ENCODE measurements at regions of chr6 and their contacts with region 1.

Region 1: DNA sequence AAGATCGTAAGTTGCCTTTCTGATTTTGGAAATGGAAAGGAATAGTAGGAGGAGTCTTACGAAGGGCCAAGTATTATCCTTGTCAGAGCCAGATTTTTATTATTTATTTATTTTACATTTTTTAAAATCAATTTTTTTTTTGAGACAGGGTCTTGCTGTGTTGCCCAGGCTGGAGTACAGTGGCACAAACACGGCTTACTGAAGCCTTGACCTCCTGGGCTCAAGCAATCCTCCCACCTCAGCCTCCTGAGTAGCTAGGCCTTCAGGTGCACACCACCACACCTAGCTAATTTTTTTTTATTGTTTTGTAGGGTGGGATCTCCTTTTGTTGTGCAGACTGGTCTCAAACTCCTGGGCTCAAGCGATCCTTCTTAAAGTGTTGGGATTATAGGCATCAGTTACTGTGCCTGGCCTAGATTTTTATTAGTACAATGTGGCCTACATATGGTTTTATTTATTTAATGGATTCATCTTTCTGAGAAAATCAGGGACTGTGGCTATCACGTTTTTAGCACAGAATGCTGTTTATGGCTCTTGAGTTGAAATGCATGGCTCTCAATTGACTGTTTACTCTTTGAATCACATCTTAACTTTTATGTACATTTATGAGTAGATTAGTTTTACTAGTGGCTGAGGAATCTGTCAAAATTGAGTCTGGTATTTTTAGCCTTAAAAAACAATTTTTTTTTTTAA is 16.7 kb downstream of the CDC5L start:
- DNase-seq: no peak
- ATAC-seq: no peak
- H3K4me3 ChIP-seq: no peak overlapping the region
- H3K27ac ChIP-seq: peak overlapping the region; percentile 34
- H3K4me1 ChIP-seq: peaks cover 15% of the 10 kb centered on the region
- H3K27me3 ChIP-seq: no peaks in the 10 kb centered on the region
- CTCF ChIP-seq: no peak
- EP300 ChIP-seq: no peak
- POLR2A ChIP-seq: no peak
- RAD21 ChIP-seq: no peak

Region 2: DNA sequence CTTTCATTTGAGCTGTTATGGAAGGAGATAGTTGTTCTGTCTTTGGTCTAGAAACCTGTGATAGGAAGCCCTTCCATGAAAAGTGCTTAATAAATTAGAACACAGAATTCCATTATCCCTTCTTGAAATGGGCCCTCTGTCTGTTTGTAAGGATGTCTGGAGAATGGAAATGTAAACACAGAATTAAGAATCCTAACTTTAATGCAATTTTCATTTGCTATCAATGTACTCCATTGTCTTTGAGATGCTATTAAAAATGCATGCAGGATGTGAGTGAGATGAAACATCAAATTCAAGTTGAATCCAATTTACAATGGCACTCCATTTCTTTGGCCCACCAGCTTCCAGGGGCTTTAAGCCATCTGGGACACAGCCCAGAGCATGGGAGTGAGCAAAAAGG is 77.1 kb before region 1 on chr6:
- CTCF ChIA-PET with region 1: no interaction called
- POLR2A ChIA-PET with region 1: no interaction called
- in situ Hi-C with region 1: no loop called
- intact Hi-C with region 1: no loop called
- DNase-seq: no peak
- ATAC-seq: no peak
- H3K4me3 ChIP-seq: no peak overlapping the region
- H3K27ac ChIP-seq: no peak overlapping the region
- H3K4me1 ChIP-seq: no peaks in the 10 kb centered on the region
- H3K27me3 ChIP-seq: peaks cover 3 to 51% of the 10 kb centered on the region in 2 experiments; a peak in 4 of 5 replicates
- CTCF ChIP-seq: no peak
- EP300 ChIP-seq: no peak
- POLR2A ChIP-seq: no peak
- RAD21 ChIP-seq: no peak

Region 3: DNA sequence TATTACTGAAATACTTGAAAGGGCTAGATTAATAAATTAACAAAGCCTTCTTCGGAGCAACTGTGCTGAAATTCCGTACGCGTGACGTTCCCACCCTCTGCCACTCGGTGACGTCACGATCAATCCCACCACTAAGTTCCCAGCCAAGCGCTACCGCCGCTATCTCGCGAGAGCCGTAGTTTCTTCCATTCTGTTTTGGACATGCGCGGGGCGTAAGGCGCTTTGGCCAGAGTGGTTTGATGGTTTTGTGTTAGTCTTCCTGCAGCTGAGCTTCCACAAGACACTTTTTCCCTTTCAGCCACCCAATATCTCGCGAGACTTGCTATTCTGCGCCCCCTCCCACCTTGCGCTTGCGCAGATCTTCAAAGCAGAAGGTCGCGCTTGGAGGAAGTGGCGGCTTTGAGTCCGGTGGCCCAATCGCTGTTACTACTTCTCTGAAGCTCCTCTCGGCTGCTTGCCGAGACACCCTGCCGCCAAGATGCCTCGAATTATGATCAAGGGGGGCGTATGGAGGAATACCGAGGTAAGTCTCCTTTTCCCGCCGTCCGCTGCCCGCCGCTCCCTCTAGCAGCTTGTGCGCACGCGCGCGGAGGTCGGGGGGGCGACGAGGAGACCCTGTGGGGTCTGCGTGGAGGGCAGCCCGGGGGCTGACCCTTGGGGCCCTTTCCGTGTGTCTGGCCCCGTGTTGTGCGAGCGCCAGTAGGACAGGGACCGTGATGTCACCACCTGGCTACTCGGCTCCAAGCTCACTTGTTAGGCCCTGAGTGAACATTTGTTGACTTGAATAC is 16.6 kb before region 1 on chr6 and contains the start of gene CDC5L:
- CTCF ChIA-PET with region 1: no interaction called
- POLR2A ChIA-PET with region 1: interaction called, 13 read pairs
- in situ Hi-C with region 1: no loop called
- intact Hi-C with region 1: no loop called
- DNase-seq: peak; percentile 99
- ATAC-seq: peak; percentile 93
- H3K4me3 ChIP-seq: peak within 1 kb of the TSS; percentile 70 to 96 (median 85)
- H3K27ac ChIP-seq: peak within 1 kb of the TSS; percentile 89
- H3K4me1 ChIP-seq: peaks cover 34% of the 10 kb centered on the region
- H3K27me3 ChIP-seq: peaks cover 0 to 3% of the 10 kb centered on the region in 2 experiments; a peak in 1 of 5 replicates
- CTCF ChIP-seq: 0 out of 2 replicates have a peak, but pooled peaks have one; percentile 7
- EP300 ChIP-seq: peak in 1 of 2 experiments; percentile 44; a peak in 1 of 4 replicates
- POLR2A ChIP-seq: peak; percentile 94 to 97
- RAD21 ChIP-seq: no peak
- total RNA-seq, gene CDC5L: 34.2 and 54.5 TPM in 2 replicates

Measured in HepG2 (cell line).